Calu3 (cell line): ENCODE measurements at regions of chr11 and their contacts with region 1.

Region 1: GRCh38 chr11:130383344-130384211 is 44.8 kb downstream of the ADAMTS8 start:
- DNase-seq: peak; percentile 14
- H3K4me3 Mint-ChIP-seq: no peak overlapping the region
- H3K27ac Mint-ChIP-seq: no peak overlapping the region
- H3K4me1 Mint-ChIP-seq: no peaks in the 10 kb centered on the region
- H3K27me3 Mint-ChIP-seq: no peaks in the 10 kb centered on the region
- CTCF ChIP-seq: no peak

Region 2: DNA sequence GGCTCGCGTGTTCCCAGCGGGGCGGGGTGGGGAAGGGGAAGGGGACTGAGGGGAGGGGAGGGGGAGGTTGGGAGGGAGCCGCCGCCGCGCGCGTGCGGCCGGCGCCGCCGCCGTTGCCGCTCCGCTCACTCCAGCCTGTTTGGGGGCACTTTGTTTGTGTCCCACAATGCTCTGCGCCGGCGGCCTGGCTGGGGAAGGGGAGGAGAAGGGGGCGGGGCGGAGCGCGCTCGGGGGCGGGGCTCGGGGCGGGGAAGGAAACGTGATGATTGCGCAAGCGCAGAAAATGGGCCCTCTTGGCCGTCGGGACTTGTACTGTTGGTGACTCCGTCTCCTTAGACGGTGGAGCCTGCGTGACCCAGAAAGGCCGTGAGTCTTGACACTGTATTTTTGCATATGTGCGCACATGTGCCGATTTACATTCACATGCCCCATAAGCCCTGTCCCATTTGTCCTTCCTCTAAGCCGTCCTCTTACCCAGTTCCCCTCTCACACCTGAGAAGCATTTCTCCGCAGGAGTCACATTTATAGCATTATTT is 68.8 kb before region 1 on chr11 and contains the start of gene ZBTB44:
- CTCF ChIA-PET with region 1: no interaction called
- intact Hi-C with region 1: loop called (anchors 10 kb)
- DNase-seq: peak; percentile 79
- H3K4me3 Mint-ChIP-seq: peak within 1 kb of the TSS; percentile 76
- H3K27ac Mint-ChIP-seq: peak within 1 kb of the TSS; percentile 90
- H3K4me1 Mint-ChIP-seq: peaks cover 46% of the 10 kb centered on the region
- H3K27me3 Mint-ChIP-seq: no peaks in the 10 kb centered on the region
- CTCF ChIP-seq: no peak
- total RNA-seq, gene ZBTB44: 23.6 and 29.7 TPM in 2 replicates